ENCODE measurements at regions of chr19 and their contacts with region 1.

Region 1: GRCh38 chr19:34480971-34481821 is at the start of gene WTIP:
- DNase-seq: peak; percentile 32
- ATAC-seq: peak; percentile 48
- H3K4me3 ChIP-seq: peak within 1 kb of the TSS; percentile 62
- H3K27ac ChIP-seq: no peak within 1 kb of the TSS
- H3K4me1 ChIP-seq: no peaks in the 10 kb centered on the region
- H3K27me3 ChIP-seq: no peaks in the 10 kb centered on the region
- CTCF ChIP-seq: no peak
- total RNA-seq, gene WTIP: 5.2 and 7.5 TPM in 2 replicates

Region 2: DNA sequence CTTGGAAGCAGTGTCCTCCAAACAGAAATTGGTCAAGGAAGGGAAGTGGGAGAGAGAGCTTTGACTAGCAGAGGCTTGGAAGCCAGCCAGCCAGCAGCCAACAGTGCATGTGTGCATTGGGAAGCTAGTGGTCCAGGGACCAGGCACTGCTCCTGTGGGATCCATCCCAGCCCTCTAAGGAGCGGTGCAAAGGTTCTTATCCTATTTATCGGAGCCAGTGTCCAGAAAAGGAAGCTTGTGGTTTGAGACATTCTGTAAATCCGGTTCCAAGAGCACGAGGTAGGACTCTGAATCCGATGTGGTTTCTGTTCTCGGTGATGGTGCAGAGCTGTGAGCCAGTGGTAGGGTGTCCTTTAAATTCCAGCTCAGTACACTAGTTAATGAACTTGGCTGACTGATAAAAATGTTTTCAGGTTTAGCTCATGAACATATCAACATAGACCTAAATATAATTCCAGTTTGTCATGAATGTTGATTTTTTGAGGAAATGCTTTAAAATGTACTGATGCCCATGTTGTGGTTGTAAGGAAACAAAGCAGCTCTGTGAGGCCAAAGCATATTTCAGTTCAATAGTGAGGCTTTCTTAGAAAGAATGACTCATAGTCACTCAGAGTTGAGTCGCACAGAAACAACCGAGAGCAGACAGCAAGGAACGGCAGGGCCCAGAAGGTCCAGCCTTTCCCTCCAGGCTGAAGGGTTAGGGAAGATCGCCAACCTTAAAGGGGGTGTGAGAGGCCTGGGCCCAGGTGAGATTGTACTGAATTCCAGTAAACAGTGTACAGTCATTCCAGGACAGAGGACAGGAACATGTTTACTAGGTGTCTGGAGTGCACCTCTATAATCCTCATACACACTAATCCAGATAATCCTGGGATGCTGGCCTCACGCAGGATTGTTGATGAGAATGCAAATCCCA is 248.4 kb before region 1 on chr19:
- CTCF ChIA-PET with region 1: no interaction called
- POLR2A ChIA-PET with region 1: interaction called, 14 read pairs
- intact Hi-C with region 1: no loop called
- DNase-seq: peak; percentile 86
- ATAC-seq: peak; percentile 92
- H3K4me3 ChIP-seq: 0 out of 2 replicates have a peak overlapping the region, but pooled peaks have one; percentile 3
- H3K27ac ChIP-seq: peak overlapping the region; percentile 81
- H3K4me1 ChIP-seq: peaks cover 30% of the 10 kb centered on the region
- H3K27me3 ChIP-seq: no peaks in the 10 kb centered on the region
- CTCF ChIP-seq: no peak

Measured in PC-3 (cell line).